Naive thymus-derived CD8-positive, alpha-beta T cell (primary cell): ENCODE measurements at regions of chr18 and their contacts with region 1.

Region 1: GRCh38 chr18:77054606-77055428 is 77.8 kb downstream of the MBP start:
- DNase-seq: peak; percentile 57 to 87 (median 82)
- ATAC-seq: peak; percentile 87 to 90
- H3K4me3 Mint-ChIP-seq: peak overlapping the region; percentile 59 to 90 (median 80)
- H3K27ac Mint-ChIP-seq: peak overlapping the region; percentile 87 to 100 (median 96)
- H3K4me1 Mint-ChIP-seq: peaks cover 35 to 74% (median 70%) of the 10 kb centered on the region in 4 donors
- H3K27me3 Mint-ChIP-seq: no peaks in the 10 kb centered on the region

Region 2: GRCh38 chr18:76922107-76922506 is 132.7 kb before region 1 on chr18:
- POLR2A ChIA-PET with region 1: no interaction called
- DNase-seq: peak; percentile 21 to 78 (median 42)
- ATAC-seq: peak; percentile 100
- H3K4me3 Mint-ChIP-seq: no peak overlapping the region
- H3K27ac Mint-ChIP-seq: peak overlapping the region in 6 of 10 donors; percentile 38 to 73 (median 50)
- H3K4me1 Mint-ChIP-seq: peaks cover 7 to 17% (median 11%) of the 10 kb centered on the region in 4 donors
- H3K27me3 Mint-ChIP-seq: no peaks in the 10 kb centered on the region

Region 3: GRCh38 chr18:77000527-77000926 is 54.3 kb before region 1 on chr18:
- POLR2A ChIA-PET with region 1: interaction called, 10 read pairs
- DNase-seq: peak in 9 of 10 donors; percentile 13 to 64 (median 46)
- ATAC-seq: no peak
- H3K4me3 Mint-ChIP-seq: peak overlapping the region in 1 of 10 donors; percentile 10
- H3K27ac Mint-ChIP-seq: peak overlapping the region in 4 of 10 donors; percentile 21 to 72 (median 28)
- H3K4me1 Mint-ChIP-seq: peaks cover 5 to 28% (median 27%) of the 10 kb centered on the region in 4 donors
- H3K27me3 Mint-ChIP-seq: no peaks in the 10 kb centered on the region

Region 4: DNA sequence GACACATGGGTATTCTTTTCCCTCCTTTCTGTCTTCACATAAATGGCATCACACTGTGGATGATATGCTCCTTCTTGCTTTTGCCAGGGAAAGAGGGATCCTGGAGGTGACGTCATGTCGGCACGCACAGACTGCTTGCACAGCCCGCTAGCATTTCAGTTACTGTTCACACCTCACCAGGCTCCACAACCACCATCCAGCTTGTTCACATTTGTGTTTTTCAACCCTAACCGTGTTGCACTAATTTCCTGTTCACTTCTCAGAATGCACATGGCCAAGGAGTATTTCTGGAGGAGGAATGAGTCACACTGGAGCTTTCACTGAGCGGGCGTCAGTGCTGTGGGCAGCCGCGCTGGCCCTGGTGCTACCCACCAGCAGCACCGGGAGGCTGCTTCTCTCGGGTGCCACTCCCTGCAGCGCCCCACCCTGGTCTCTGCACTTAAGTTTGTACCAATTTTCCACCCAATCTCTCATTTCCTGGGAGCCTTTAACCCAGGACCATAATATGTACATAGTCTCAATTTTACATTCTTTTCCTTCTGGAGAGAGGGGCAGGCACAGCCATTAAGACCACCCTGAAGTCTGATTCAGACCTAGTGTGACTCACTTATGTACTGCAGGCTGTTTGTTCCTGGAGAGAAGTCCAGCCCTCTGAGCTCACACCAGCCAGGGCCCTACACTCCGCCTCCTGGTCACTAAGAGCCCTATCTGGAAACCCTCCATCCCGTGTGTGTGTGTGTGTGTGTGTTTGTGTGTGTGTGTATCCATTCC is 12.7 kb after region 1 on chr18:
- POLR2A ChIA-PET with region 1: interaction called, 16 read pairs
- DNase-seq: peak in 6 of 10 donors; percentile 18 to 60 (median 46)
- ATAC-seq: peak; percentile 9 to 30
- H3K4me3 Mint-ChIP-seq: peak overlapping the region; percentile 32 to 83 (median 72)
- H3K27ac Mint-ChIP-seq: peak overlapping the region; percentile 75 to 98 (median 94)
- H3K4me1 Mint-ChIP-seq: peaks cover 50 to 100% (median 91%) of the 10 kb centered on the region in 4 donors
- H3K27me3 Mint-ChIP-seq: no peaks in the 10 kb centered on the region

Region 5: GRCh38 chr18:77101410-77102258 is 46.8 kb after region 1 on chr18:
- POLR2A ChIA-PET with region 1: interaction called, 10 read pairs
- DNase-seq: peak in 1 of 10 donors; percentile 20
- ATAC-seq: peak; percentile 13 to 31
- H3K4me3 Mint-ChIP-seq: peak overlapping the region; percentile 63 to 89 (median 82)
- H3K27ac Mint-ChIP-seq: peak overlapping the region; percentile 96 to 99 (median 98)
- H3K4me1 Mint-ChIP-seq: peaks cover 49 to 97% (median 91%) of the 10 kb centered on the region in 4 donors
- H3K27me3 Mint-ChIP-seq: no peaks in the 10 kb centered on the region